ENCODE measurements at regions of chr11 and their contacts with region 1.

Region 1: DNA sequence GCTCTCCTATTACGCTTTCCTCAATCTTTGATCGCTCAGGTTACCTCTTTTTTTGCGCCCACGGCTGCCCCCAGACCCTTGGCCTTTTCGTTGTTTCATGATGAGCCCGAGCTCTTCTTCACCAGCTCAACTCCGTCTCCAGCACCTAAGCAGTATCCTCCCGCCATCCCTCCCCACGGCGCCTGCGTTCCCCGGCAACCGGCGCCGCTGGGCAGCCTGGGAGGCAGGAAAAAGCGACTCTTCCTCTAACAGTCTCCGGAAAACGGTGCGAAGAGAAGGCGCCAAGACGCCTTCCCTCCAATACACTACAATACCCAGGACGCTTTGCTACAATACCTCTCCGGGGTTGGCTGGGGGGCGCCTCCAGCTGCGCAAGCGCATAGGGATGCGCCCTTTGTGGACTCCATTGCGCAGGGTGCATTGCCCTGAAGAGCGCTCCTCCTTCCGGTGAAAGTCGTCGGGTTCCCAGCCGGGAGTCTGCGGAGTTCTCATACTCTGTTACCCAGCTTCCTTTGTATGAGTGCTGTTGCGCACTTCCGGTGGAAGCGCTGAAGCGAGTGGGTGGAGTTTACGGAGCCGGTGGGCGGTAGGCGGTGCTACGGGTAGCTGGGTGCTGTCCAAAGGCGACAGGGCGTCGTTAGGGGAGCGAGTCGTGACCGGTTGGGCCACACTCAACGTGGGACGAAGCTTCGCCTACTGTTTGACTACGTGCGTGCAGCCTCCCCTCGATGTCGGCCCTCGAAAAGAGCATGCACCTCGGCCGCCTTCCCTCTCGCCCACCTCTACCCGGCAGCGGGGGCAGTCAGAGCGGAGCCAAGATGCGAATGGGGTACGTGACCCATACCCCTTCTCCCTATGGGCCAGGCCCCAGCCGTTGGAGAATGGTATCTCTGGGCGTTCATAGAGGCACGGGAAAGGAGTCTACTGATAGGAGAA is at the starts of genes C2CD3 and PPME1:
- DNase-seq: peak; percentile 98 to 99
- ATAC-seq: peak; percentile 100
- H3K4me3 ChIP-seq: peak within 1 kb of the TSS; percentile 82 to 90
- H3K27ac ChIP-seq: peak within 1 kb of the TSS; percentile 3 to 76
- H3K4me1 ChIP-seq: peaks cover 0 to 17% of the 10 kb centered on the region in 2 donors
- H3K27me3 ChIP-seq: no peaks in the 10 kb centered on the region
- total RNA-seq, gene C2CD3: 21.2 to 29.4 TPM
- total RNA-seq, gene PPME1: 35.8 to 43.2 TPM

Region 2: DNA sequence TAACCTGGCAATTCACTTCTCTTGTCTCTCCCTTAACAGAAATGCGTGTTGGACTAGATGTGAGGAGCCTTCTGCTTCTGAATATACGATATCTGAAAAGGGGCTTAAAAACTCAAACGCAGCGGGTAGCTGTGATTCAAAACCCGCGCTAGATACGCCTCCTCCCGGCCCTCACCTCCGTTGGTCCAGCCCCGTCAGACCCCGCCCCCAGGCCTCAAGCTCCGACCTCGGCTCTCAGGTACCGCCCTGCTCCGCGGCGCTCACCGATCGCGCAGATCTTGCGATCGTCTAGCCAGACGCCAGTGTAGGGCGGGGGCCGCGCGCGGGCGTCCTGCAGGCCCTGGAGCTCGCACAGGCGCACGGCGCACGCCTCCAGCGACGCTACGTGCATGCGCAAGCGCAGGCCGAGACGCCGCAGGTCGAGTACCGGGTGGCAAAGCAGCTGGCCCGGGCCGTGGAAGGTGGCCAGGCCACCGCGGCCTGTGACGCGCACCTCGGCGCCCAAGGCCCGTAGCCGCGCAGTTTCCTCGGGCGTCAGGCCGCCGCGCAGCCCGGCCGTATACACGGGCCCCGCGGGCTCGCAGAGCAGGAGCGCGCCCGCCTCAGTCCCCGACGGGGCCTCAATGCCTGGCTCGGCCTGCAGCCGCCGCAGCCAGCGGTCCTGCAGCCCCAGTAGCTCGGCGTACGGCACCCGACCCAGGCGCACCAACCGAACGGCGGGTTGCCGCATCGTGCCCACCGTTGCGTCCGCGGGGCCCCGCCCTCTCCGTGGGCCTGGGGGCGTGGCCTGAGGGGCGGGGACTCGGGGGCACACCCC is 322.2 kb after region 1 on chr11 and contains the start of gene LIPT2:
- intact Hi-C with region 1: loop called in 1 of 2 experiments (anchors 2 kb)
- DNase-seq: peak; percentile 98
- ATAC-seq: peak; percentile 99
- H3K4me3 ChIP-seq: peak within 1 kb of the TSS; percentile 72 to 79
- H3K27ac ChIP-seq: peak within 1 kb of the TSS; percentile 91 to 98
- H3K4me1 ChIP-seq: peaks cover 0 to 2% of the 10 kb centered on the region in 2 donors
- H3K27me3 ChIP-seq: no peaks in the 10 kb centered on the region
- total RNA-seq, gene LIPT2: 1.0 to 1.8 TPM